Endothelial cell of umbilical vein (primary cell): ENCODE measurements at regions of chr6 and their contacts with region 1.

Region 1: GRCh38 chr6:133512410-133513016 is 271.4 kb downstream of the EYA4 start:
- DNase-seq: peak; percentile 60
- H3K4me3 ChIP-seq: no peak overlapping the region
- H3K27ac ChIP-seq: no peak overlapping the region
- H3K4me1 ChIP-seq: no peaks in the 10 kb centered on the region
- H3K27me3 ChIP-seq: no peaks in the 10 kb centered on the region
- CTCF ChIP-seq: peak; percentile 21 to 49
- POLR2A ChIP-seq: no peak

Region 2: DNA sequence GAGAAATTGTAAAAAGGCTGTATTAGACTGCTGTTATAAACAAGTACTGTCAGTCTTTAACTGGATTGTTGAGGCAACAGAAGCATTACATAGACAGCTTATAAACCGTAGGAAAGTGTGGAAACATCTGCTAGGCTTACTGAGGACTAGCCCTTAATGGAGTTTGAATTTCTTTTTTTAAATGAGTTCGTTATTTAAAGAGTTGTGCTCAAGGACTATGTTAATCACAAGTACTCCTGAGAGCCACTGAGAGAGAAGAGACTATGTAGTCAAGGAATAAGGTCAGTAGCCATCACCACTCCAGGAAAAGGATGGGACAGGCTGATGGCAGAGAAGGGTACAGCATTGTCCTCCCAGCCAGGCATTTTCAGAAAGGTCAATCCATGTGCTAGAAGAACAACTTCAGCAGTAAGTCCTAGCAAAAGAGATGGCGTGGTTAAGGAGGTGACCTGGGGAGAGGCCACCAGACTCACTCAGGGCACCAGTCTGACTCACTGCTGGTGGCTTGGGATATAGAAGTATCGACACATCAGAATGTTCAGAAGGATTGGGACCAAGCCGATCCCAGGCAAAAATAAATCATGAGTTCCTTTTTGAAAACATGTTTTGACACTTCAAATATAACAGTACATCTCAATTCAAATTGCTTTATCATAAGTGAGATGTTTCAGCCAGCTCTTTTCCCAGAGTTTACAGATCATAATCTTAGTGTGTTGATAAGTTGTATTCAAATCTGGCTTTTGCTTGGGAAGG is 691.7 kb before region 1 on chr6:
- CTCF ChIA-PET with region 1: interaction called, 3 read pairs
- POLR2A ChIA-PET with region 1: no interaction called
- dilution Hi-C with region 1: no loop called
- intact Hi-C with region 1: loop called (anchors 1 kb)
- DNase-seq: peak; percentile 29
- H3K4me3 ChIP-seq: no peak overlapping the region
- H3K27ac ChIP-seq: no peak overlapping the region
- H3K4me1 ChIP-seq: peaks cover 9% of the 10 kb centered on the region
- H3K27me3 ChIP-seq: no peaks in the 10 kb centered on the region
- CTCF ChIP-seq: no peak
- POLR2A ChIP-seq: peak; percentile 63

Region 3: DNA sequence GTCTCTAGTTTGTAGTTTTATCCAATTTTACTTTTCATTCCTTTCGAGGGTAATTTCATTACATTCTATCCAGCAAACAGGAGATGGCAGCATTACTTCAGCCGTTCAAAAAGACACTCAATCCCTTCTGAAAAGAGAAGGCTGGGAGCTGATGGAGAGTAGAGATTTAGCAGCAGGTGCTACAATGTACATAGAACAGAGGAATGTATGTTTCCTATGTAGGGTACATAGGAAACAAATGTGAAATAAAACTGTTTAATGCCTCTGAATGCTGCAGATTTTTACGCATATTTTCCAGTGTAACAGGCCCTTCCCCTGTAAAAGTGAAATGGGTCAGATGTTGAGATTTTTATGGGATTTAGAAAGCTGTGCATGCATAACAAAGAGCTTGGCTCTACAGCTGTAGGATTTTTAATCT is 682.2 kb before region 1 on chr6:
- CTCF ChIA-PET with region 1: interaction called, 6 read pairs
- POLR2A ChIA-PET with region 1: no interaction called
- dilution Hi-C with region 1: no loop called
- intact Hi-C with region 1: loop called (anchors 1 kb)
- DNase-seq: peak; percentile 34
- H3K4me3 ChIP-seq: no peak overlapping the region
- H3K27ac ChIP-seq: no peak overlapping the region
- H3K4me1 ChIP-seq: no peaks in the 10 kb centered on the region
- H3K27me3 ChIP-seq: no peaks in the 10 kb centered on the region
- CTCF ChIP-seq: peak in 1 of 2 donors; percentile 18
- POLR2A ChIP-seq: no peak

Region 4: DNA sequence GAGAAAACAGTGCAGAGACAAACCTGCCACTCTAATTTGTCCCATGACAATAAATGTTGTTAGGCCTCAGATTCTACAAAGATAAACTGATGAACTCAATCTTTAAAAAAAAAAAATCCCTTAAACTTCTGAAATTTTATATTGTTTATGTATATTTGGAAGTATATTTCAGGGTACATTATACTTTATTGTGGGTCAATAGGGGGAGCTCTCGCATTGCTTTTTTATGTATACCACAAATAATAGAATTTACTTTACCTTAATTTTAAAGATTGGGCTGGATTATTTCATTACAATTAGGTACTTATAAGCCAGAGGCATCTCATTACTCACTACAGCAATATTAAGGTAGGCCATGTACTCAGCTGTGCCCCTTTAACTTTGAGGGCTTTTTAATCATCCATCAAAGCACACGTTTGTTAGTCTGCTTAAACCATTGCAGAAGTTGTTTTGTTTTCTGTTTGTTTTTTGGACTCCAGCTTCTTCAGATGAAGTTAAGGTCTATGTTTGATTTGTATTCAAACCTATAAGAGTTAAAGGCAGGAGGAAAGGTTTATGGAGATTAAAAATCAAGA is 327.6 kb before region 1 on chr6:
- CTCF ChIA-PET with region 1: no interaction called
- POLR2A ChIA-PET with region 1: no interaction called
- dilution Hi-C with region 1: no loop called
- intact Hi-C with region 1: loop called (anchors 2 kb)
- DNase-seq: peak; percentile 32
- H3K4me3 ChIP-seq: no peak overlapping the region
- H3K27ac ChIP-seq: no peak overlapping the region
- H3K4me1 ChIP-seq: no peaks in the 10 kb centered on the region
- H3K27me3 ChIP-seq: no peaks in the 10 kb centered on the region
- CTCF ChIP-seq: peak; percentile 18 to 35
- POLR2A ChIP-seq: no peak

Region 5: DNA sequence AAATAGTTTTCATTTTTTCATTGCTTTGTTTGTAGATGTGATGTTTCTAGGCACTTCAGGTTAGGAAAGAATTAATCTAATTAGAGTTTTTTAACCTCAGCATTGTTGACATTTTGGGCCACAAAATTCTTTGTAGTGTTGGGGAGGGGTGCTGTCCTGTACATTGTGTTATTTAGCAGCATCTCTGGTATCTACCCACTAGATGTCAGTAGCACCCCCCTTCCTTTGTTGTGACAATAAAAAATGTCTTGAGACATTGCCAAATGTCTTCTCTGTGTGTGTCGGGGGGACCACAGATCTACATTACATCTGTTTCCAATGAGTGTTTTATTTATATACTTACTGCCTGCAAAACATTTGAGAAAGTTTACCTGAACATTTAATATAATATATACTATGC is 225.7 kb before region 1 on chr6:
- CTCF ChIA-PET with region 1: no interaction called
- POLR2A ChIA-PET with region 1: no interaction called
- dilution Hi-C with region 1: no loop called
- intact Hi-C with region 1: loop called (anchors 2 kb)
- DNase-seq: peak; percentile 8
- H3K4me3 ChIP-seq: no peak overlapping the region
- H3K27ac ChIP-seq: no peak overlapping the region
- H3K4me1 ChIP-seq: no peaks in the 10 kb centered on the region
- H3K27me3 ChIP-seq: peaks cover 0 to 3% of the 10 kb centered on the region in 2 experiments
- CTCF ChIP-seq: no peak
- POLR2A ChIP-seq: no peak